Breast epithelium (tissue), 4 donors: ENCODE measurements at regions of chr13 and their contacts with region 1.

Region 1: DNA sequence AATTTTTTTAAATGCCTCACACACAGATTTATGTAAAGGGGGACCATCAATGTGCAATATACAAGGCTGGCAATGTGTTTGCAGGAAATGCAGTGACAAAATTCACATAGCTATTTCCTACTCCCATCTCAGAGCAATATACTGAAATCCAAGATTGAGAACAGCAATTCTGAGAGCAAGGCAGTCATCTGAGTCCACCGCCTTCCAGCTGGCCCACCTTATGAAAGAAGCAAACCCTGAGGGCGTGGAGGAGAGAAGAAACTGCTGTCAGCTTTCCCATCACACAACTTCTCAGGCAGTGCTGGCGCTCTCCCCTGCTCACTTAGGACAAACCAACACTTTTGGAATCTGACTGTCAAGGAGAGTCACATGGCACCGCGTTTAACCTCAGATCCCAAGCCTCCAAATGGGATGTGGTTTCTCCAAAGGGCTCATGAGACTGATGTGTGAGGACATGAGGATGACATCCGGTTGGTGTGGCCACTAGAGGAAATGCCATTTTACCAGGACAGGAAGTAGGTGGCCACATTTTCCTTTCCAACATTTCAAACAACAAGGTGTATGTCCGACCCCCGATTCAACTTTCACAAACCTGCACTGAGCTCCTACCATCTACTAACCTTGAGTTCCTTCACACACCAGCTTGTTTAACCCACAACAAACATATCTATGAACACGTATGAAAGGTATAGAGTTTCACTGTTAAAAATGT is 3.7 kb upstream of the DOCK9 start:
- DNase-seq: no peak
- H3K4me3 ChIP-seq: no peak overlapping the region
- H3K27ac ChIP-seq: no peak overlapping the region
- H3K4me1 ChIP-seq: peaks cover 0 to 6% of the 10 kb centered on the region in 2 donors
- H3K27me3 ChIP-seq: no peaks in the 10 kb centered on the region
- CTCF ChIP-seq: no peak
- POLR2A ChIP-seq: no peak

Region 2: GRCh38 chr13:99075268-99076191 is 94.0 kb after region 1 on chr13:
- intact Hi-C with region 1: no loop called
- DNase-seq: no peak
- H3K4me3 ChIP-seq: no peak overlapping the region
- H3K27ac ChIP-seq: no peak overlapping the region
- H3K4me1 ChIP-seq: no peaks in the 10 kb centered on the region
- H3K27me3 ChIP-seq: no peaks in the 10 kb centered on the region
- CTCF ChIP-seq: no peak
- POLR2A ChIP-seq: no peak

Region 3: DNA sequence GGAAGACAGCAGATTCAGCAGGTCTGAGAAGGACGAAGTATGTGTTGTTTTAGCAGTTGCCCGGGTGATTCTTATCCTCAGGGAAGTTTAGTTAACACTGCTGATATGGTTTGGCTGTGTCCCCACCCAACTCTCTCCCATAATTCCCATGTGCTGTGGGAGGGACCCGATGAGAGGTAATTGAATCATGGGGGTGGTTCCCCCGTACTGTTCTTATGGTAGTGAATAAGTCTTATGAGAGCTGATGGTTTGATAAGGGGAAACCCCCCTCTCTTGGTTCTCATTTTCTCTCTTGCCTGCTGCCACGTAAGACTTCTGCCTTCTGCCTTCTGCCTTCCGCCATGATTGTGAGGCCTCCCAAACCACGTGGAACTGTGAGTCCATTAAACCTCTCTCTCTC is 138.2 kb after region 1 on chr13:
- intact Hi-C with region 1: loop called (anchors 10 kb)
- DNase-seq: no peak
- H3K4me3 ChIP-seq: no peak overlapping the region
- H3K27ac ChIP-seq: no peak overlapping the region
- H3K4me1 ChIP-seq: no peaks in the 10 kb centered on the region
- H3K27me3 ChIP-seq: peaks cover 0 to 11% of the 10 kb centered on the region in 2 donors
- CTCF ChIP-seq: no peak
- POLR2A ChIP-seq: no peak